MCF 10A (cell line): ENCODE measurements at regions of chr18 and their contacts with region 1.

Region 1: DNA sequence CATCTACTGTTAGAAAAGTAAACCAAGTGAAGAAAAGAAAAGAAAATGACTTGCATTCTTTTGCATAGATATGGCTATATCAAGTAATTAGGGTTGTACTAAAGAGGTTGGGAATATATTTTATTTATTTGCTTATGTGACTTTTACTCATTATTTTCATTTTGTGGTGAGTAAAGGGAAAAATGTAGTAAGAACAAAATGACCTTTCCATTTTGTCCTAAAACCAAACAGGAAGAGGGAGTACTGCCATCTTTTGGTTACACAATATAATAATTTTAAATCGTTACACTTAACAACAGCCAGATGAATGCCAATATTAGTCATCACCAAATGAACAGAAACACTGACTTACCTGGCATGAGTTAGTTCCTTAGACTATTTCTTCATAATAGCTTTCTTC is 47.3 kb upstream of the NDUFV2 start:
- DNase-seq: peak; percentile 90
- H3K4me3 Mint-ChIP-seq: peak overlapping the region; percentile 31
- H3K27ac Mint-ChIP-seq: peak overlapping the region; percentile 89
- H3K4me1 Mint-ChIP-seq: peaks cover 16% of the 10 kb centered on the region
- H3K27me3 Mint-ChIP-seq: no peaks in the 10 kb centered on the region
- CTCF ChIP-seq: no peak

Region 2: DNA sequence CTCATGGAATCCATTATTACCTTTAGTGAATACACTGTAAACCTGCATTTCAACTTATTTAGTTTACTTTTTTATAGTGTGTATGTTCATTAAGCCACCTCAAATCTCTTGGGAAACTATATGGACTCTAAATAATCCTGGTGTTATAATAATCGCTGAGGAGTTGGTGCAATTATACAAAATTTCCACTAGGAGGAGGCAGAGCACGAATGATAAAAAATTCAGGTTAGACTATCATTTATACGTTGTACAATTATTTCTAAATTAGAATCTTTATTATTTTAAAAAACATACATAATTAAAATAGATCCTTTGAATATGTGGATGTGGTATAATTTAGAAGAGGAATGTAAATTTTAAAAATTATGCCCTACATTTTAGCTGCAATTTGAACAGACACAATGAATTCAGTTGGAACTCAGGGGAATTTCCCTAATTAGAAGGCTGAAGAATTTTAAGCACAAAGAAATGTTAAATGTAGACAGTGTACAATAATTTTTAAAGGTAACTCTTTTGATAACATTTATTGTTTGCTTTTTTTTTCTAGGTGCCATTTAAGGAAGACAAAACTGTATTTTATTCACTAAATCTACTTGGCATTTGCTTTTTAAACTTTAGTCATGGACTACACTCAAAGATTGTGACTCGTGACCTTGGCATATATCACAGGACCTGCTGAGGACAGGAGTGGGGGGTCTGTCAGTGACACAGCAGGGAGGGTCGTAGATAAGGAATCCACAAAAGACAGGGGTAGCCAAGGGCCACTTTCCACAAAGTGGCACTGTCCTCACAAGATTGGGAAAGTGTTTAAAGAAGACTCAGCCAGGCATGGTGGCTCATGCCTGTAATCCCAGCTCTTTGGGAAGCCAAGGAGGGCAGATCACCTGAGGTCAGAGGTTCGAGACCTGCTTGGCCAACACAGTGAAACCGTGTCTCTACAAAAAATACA is 400.4 kb before region 1 on chr18:
- CTCF ChIA-PET with region 1: interaction called, 4 read pairs
- POLR2A ChIA-PET with region 1: no interaction called
- intact Hi-C with region 1: loop called (anchors 1 kb)
- DNase-seq: peak; percentile 40
- H3K4me3 Mint-ChIP-seq: no peak overlapping the region
- H3K27ac Mint-ChIP-seq: no peak overlapping the region
- H3K4me1 Mint-ChIP-seq: peaks cover 10% of the 10 kb centered on the region
- H3K27me3 Mint-ChIP-seq: peaks cover 14% of the 10 kb centered on the region
- CTCF ChIP-seq: peak; percentile 71

Region 3: DNA sequence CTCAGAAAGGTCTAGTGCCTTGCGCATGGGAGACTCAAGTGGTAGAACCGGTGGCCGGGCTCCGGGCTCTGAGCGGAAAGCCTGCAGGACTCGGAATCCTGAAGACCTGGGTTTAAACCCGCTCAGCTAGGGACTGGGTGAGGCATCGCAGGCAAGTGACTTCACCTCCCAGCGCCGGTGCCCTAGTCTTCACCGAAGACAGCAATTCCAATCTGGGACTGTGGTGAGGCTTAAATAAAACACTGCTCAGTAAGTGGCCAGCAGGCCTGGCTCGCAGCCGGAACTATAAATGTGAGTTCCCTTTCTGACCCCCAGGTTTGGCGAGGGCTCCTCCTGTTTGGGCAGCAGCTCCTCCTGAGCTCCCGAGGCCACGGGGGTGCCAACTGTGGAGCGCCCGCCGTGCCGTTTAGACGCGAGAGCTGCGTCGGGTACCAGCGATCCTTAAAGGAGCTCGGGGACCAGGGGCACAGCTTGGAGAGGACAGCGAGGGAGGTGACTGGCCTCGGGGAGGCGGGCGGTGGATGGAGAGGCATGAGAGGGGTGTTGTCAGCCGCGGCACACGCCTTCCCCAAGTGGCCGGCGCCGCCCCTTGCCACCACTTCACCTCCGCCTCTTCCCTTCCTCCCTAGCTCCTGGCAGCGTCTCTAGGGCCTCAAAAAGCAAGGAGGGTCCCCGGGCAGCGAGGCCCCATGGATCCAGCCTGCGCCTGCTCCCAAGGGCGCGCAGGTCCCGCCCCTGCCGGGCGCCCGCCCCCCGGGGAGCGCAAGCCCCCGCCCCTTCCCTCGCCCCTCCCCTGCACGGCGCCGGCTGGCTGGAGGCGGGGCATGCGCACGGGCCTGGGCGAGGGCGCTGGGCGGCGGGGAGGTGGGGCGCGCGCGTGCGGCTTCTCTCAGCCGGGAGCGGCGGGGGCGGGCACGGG is 350.6 kb before region 1 on chr18:
- CTCF ChIA-PET with region 1: no interaction called
- POLR2A ChIA-PET with region 1: no interaction called
- intact Hi-C with region 1: loop called (anchors 5 kb)
- DNase-seq: peak; percentile 87
- H3K4me3 Mint-ChIP-seq: peak overlapping the region; percentile 90
- H3K27ac Mint-ChIP-seq: no peak overlapping the region
- H3K4me1 Mint-ChIP-seq: peaks cover 27% of the 10 kb centered on the region
- H3K27me3 Mint-ChIP-seq: no peaks in the 10 kb centered on the region
- CTCF ChIP-seq: no peak

Region 4: GRCh38 chr18:9017170-9017904 is 37.8 kb before region 1 on chr18:
- CTCF ChIA-PET with region 1: no interaction called
- POLR2A ChIA-PET with region 1: interaction called, 12 read pairs
- intact Hi-C with region 1: no loop called
- DNase-seq: peak; percentile 94
- H3K4me3 Mint-ChIP-seq: peak overlapping the region; percentile 63
- H3K27ac Mint-ChIP-seq: peak overlapping the region; percentile 46
- H3K4me1 Mint-ChIP-seq: peaks cover 13% of the 10 kb centered on the region
- H3K27me3 Mint-ChIP-seq: no peaks in the 10 kb centered on the region
- CTCF ChIP-seq: no peak

Region 5: DNA sequence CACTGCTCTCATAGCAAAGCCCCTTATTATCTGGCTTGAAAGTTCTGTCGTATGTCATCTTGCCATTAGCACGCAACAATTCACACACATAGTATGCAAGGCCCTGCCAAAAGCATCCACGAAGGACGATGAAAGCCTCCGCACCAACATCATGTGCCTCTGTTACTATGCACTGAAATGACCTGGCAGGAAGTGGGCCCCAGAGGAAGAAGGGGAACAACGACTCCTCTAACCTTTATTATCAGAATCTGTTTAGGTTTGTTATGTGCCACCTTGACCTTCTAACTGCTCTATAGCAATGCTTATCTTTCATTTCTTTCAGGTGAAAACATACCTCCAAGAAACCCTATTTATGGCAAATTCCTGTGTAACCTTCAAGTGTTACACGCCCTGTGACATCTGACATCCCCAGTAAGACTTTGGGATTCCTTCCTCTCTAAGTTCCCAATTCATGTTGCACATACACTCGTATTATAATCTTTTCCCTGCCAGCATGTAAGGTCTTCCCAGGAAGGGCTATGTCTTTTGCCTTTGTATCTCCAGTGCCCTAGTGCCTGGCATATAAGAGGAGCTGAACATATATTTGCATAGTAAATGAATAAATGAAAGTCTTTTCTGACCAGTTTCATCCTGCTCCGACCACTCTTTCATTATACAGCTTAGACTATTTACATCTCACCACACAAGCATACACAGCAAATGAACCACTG is 40.3 kb after region 1 on chr18:
- CTCF ChIA-PET with region 1: no interaction called
- POLR2A ChIA-PET with region 1: no interaction called
- intact Hi-C with region 1: no loop called
- DNase-seq: no peak
- H3K4me3 Mint-ChIP-seq: no peak overlapping the region
- H3K27ac Mint-ChIP-seq: no peak overlapping the region
- H3K4me1 Mint-ChIP-seq: no peaks in the 10 kb centered on the region
- H3K27me3 Mint-ChIP-seq: no peaks in the 10 kb centered on the region
- CTCF ChIP-seq: no peak